ENCODE measurements at regions of chr10 and their contacts with region 1.

Region 1: GRCh38 chr10:5977471-5978229 is at the start of gene IL15RA:
- DNase-seq: peak; percentile 93
- ATAC-seq: peak; percentile 87
- H3K4me3 Mint-ChIP-seq: peak within 1 kb of the TSS; percentile 97
- H3K27ac Mint-ChIP-seq: peak within 1 kb of the TSS; percentile 98
- H3K4me1 Mint-ChIP-seq: peaks cover 26% of the 10 kb centered on the region
- H3K27me3 Mint-ChIP-seq: peaks cover 5% of the 10 kb centered on the region
- total RNA-seq, gene IL15RA: 17.2 to 18.1 TPM

Region 2: GRCh38 chr10:5692461-5693358 is 284.9 kb before region 1 on chr10:
- CTCF ChIA-PET with region 1: no interaction called
- POLR2A ChIA-PET with region 1: interaction called, 11 read pairs
- DNase-seq: peak; percentile 70
- ATAC-seq: peak; percentile 89
- H3K4me3 Mint-ChIP-seq: peak overlapping the region; percentile 74
- H3K27ac Mint-ChIP-seq: peak overlapping the region; percentile 71
- H3K4me1 Mint-ChIP-seq: peaks cover 54% of the 10 kb centered on the region
- H3K27me3 Mint-ChIP-seq: no peaks in the 10 kb centered on the region

Region 3: DNA sequence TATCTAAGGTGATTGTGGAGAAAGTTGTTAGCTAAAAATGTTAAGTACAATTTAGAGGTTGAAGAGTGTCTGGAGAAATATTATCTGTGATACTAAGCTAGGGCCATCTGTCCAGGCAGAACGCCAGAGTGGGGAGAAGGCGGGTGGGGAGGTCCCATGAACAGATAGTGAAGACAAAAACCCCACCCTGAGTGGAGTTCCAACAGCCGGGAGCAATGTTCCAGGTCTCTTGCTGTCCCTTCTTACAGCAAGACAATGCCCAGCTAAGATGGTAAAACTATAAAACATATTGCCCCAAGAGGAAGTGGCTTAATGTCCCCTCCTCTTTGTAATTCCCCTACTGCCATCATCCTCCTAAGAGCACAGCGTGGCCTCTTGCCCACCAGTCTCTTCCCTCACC is 10.1 kb after region 1 on chr10:
- CTCF ChIA-PET with region 1: interaction called, 22 read pairs
- POLR2A ChIA-PET with region 1: interaction called, 18 read pairs
- DNase-seq: peak; percentile 20
- ATAC-seq: no peak
- H3K4me3 Mint-ChIP-seq: no peak overlapping the region
- H3K27ac Mint-ChIP-seq: no peak overlapping the region
- H3K4me1 Mint-ChIP-seq: peaks cover 14% of the 10 kb centered on the region
- H3K27me3 Mint-ChIP-seq: peaks cover 14% of the 10 kb centered on the region

Region 4: GRCh38 chr10:6002809-6003510 is 25.3 kb after region 1 on chr10:
- CTCF ChIA-PET with region 1: no interaction called
- POLR2A ChIA-PET with region 1: no interaction called
- DNase-seq: peak; percentile 17
- ATAC-seq: no peak
- H3K4me3 Mint-ChIP-seq: no peak overlapping the region
- H3K27ac Mint-ChIP-seq: no peak overlapping the region
- H3K4me1 Mint-ChIP-seq: peaks cover 22% of the 10 kb centered on the region
- H3K27me3 Mint-ChIP-seq: peaks cover 3% of the 10 kb centered on the region

Region 5: DNA sequence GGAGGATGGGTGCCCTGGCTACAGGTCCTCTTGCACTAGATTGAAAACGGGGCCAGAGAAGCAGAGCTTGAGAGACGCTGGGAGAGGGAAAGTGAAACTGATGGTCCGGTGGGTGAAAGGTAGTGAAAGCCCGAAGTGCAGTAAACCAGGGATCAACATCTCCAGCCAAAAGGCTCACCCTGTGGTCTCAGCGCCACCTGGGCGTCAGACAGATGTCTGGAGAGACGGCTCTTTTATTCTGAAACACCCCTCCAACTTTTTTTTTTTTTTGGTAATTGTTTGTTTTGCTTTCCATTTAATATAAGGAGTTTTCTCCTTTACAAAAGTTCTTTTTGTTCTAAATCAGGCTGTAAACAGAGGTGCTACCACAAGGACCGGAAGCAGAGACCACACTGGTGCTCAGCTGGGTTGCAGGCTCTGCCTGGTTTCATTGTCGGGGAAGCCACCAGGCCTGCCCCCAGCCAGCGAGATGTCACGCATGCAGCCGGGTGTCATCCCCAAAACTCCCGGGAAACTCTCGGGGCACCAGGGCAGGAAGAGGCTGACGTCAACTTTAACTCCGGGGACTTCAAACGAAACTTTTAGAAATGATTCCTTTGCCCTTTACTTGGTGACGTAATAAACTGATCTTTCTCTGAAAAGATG is 73.3 kb after region 1 on chr10:
- CTCF ChIA-PET with region 1: interaction called, 12 read pairs
- POLR2A ChIA-PET with region 1: interaction called, 9 read pairs
- DNase-seq: peak; percentile 96
- ATAC-seq: peak; percentile 74
- H3K4me3 Mint-ChIP-seq: peak overlapping the region; percentile 88
- H3K27ac Mint-ChIP-seq: peak overlapping the region; percentile 98
- H3K4me1 Mint-ChIP-seq: peaks cover 85% of the 10 kb centered on the region
- H3K27me3 Mint-ChIP-seq: no peaks in the 10 kb centered on the region

Region 6: GRCh38 chr10:6062101-6062771 is 84.6 kb after region 1 on chr10 and contains the start of gene IL2RA:
- CTCF ChIA-PET with region 1: interaction called, 3 read pairs
- POLR2A ChIA-PET with region 1: interaction called, 16 read pairs
- DNase-seq: peak; percentile 73
- ATAC-seq: peak; percentile 74
- H3K4me3 Mint-ChIP-seq: peak within 1 kb of the TSS; percentile 91
- H3K27ac Mint-ChIP-seq: peak within 1 kb of the TSS; percentile 92
- H3K4me1 Mint-ChIP-seq: peaks cover 72% of the 10 kb centered on the region
- H3K27me3 Mint-ChIP-seq: no peaks in the 10 kb centered on the region
- total RNA-seq, gene IL2RA: 174 to 177 TPM

Region 7: GRCh38 chr10:6068422-6068821 is 90.8 kb after region 1 on chr10:
- CTCF ChIA-PET with region 1: interaction called, 3 read pairs
- POLR2A ChIA-PET with region 1: interaction called, 16 read pairs
- DNase-seq: peak; percentile 81
- ATAC-seq: peak; percentile 77
- H3K4me3 Mint-ChIP-seq: peak overlapping the region; percentile 74
- H3K27ac Mint-ChIP-seq: peak overlapping the region; percentile 95
- H3K4me1 Mint-ChIP-seq: peaks cover 94% of the 10 kb centered on the region
- H3K27me3 Mint-ChIP-seq: no peaks in the 10 kb centered on the region

Region 8: GRCh38 chr10:6083523-6084475 is 106.1 kb after region 1 on chr10:
- CTCF ChIA-PET with region 1: interaction called, 13 read pairs
- POLR2A ChIA-PET with region 1: interaction called, 11 read pairs
- DNase-seq: peak; percentile 74
- ATAC-seq: peak; percentile 67
- H3K4me3 Mint-ChIP-seq: peak overlapping the region; percentile 64
- H3K27ac Mint-ChIP-seq: peak overlapping the region; percentile 86
- H3K4me1 Mint-ChIP-seq: peaks cover 78% of the 10 kb centered on the region
- H3K27me3 Mint-ChIP-seq: no peaks in the 10 kb centered on the region

Measured in activated CD8-positive, alpha-beta T cell treated with anti-CD3 and anti-CD28 coated beads, Interleukin-2, amount 10 ng/mL, durations not matched to agents 7 days and 5 days (primary cell).